ENCODE measurements at regions of chr10 and their contacts with region 1.

Region 1: GRCh38 chr10:70115948-70116682 is 16.5 kb downstream of the AIFM2 start:
- DNase-seq: peak; percentile 41
- ATAC-seq: peak; percentile 80
- H3K4me3 ChIP-seq: no peak overlapping the region
- H3K27ac ChIP-seq: no peak overlapping the region
- H3K4me1 ChIP-seq: no peaks in the 10 kb centered on the region
- H3K27me3 ChIP-seq: no peaks in the 10 kb centered on the region
- CTCF ChIP-seq: peak; percentile 99

Region 2: GRCh38 chr10:70132098-70133029 is 16.2 kb after region 1 on chr10 and contains the start of gene AIFM2:
- CTCF ChIA-PET with region 1: interaction called, 15 read pairs
- POLR2A ChIA-PET with region 1: no interaction called
- in situ Hi-C with region 1: no loop called
- intact Hi-C with region 1: no loop called
- DNase-seq: no peak
- ATAC-seq: peak; percentile 85
- H3K4me3 ChIP-seq: peak within 1 kb of the TSS; percentile 55 to 81
- H3K27ac ChIP-seq: peak within 1 kb of the TSS; percentile 92
- H3K4me1 ChIP-seq: peaks cover 19% of the 10 kb centered on the region
- H3K27me3 ChIP-seq: no peaks in the 10 kb centered on the region
- CTCF ChIP-seq: no peak
- total RNA-seq, gene AIFM2: 16.6 TPM

Region 3: GRCh38 chr10:70146489-70147258 is 30.6 kb after region 1 on chr10 and contains the start of gene TYSND1:
- CTCF ChIA-PET with region 1: interaction called, 18 read pairs
- POLR2A ChIA-PET with region 1: no interaction called
- in situ Hi-C with region 1: no loop called
- intact Hi-C with region 1: no loop called
- DNase-seq: peak; percentile 93
- ATAC-seq: peak; percentile 87
- H3K4me3 ChIP-seq: peak within 1 kb of the TSS; percentile 69 to 85
- H3K27ac ChIP-seq: peak within 1 kb of the TSS; percentile 89
- H3K4me1 ChIP-seq: peaks cover 12% of the 10 kb centered on the region
- H3K27me3 ChIP-seq: no peaks in the 10 kb centered on the region
- CTCF ChIP-seq: peak; percentile 92
- total RNA-seq, gene TYSND1: 39.3 TPM

Region 4: DNA sequence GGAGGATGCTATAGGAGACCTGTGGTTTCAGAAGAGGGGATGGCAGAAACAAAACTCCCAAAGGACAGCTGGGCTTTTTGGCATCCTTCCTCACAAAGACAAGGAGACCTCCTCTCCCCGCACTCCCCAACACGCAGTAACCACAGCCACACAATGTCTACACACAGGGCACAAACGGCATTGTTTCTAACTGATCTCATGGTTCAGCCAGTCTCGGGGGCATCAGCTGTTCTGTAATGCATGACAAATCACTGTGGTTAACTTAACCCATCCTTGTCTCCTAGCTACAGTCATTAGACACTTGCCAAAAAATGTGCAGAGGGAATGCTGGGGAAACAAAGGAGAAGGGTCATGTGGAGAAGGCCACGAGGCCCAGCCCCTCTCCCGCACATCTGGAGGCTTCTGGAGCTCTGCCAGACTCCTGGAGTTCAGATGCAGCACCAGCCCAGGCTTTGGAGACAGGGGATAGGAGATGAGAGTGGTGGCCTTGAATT is 548.6 kb after region 1 on chr10:
- CTCF ChIA-PET with region 1: no interaction called
- POLR2A ChIA-PET with region 1: no interaction called
- in situ Hi-C with region 1: no loop called
- intact Hi-C with region 1: no loop called
- DNase-seq: no peak
- ATAC-seq: peak; percentile 48; the same call in 1 of the 2 replicates
- H3K4me3 ChIP-seq: no peak overlapping the region
- H3K27ac ChIP-seq: no peak overlapping the region
- H3K4me1 ChIP-seq: no peaks in the 10 kb centered on the region
- H3K27me3 ChIP-seq: no peaks in the 10 kb centered on the region
- CTCF ChIP-seq: no peak

Measured in Panc1 (cell line).